GM10248 (cell line): ENCODE measurements at regions of chr4 and their contacts with region 1.

Region 1: GRCh38 chr4:53015681-53016080 is 153.6 kb downstream of the RASL11B start:
- DNase-seq: no peak
- CTCF ChIP-seq: peak; percentile 56

Region 2: DNA sequence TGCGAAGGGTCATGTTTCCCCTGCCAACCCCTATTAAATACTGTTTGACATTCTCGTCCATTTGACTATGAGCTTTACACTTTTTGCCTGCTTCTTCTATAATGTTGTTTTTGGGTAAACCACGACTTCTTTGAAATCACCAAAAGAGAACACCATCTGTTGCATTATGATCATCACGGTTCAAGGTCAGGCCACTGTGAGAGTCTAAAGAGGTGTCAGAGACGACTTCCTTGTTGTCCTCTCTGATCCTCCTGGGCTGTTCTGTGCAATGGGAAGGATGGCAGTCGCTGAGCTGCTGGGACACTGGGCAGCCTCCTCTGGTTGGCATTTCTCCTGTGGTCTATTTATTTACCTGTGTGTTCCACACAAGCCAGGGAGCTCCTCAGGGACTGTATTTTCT is 16.1 kb before region 1 on chr4:
- CTCF ChIA-PET with region 1: interaction called, 26 read pairs
- POLR2A ChIA-PET with region 1: no interaction called
- DNase-seq: no peak
- CTCF ChIP-seq: no peak

Region 3: GRCh38 chr4:53005149-53005546 is 10.5 kb before region 1 on chr4:
- CTCF ChIA-PET with region 1: interaction called, 26 read pairs
- POLR2A ChIA-PET with region 1: no interaction called
- DNase-seq: no peak
- CTCF ChIP-seq: no peak

Region 4: GRCh38 chr4:53804719-53805118 is 789.0 kb after region 1 on chr4:
- CTCF ChIA-PET with region 1: interaction called, 14 read pairs
- POLR2A ChIA-PET with region 1: no interaction called
- DNase-seq: peak; percentile 40
- CTCF ChIP-seq: peak; percentile 67